Endothelial cell of umbilical vein (primary cell): ENCODE measurements at regions of chr1 and their contacts with region 1.

Region 1: GRCh38 chr1:234925440-234926263 is 203.0 kb downstream of the TOMM20 start:
- DNase-seq: peak; percentile 94
- H3K4me3 ChIP-seq: no peak overlapping the region
- H3K27ac ChIP-seq: peak overlapping the region; percentile 90
- H3K4me1 ChIP-seq: peaks cover 41% of the 10 kb centered on the region
- H3K27me3 ChIP-seq: no peaks in the 10 kb centered on the region
- CTCF ChIP-seq: no peak
- POLR2A ChIP-seq: no peak

Region 2: GRCh38 chr1:234962340-234962989 is 36.8 kb after region 1 on chr1:
- CTCF ChIA-PET with region 1: interaction called, 4 read pairs
- POLR2A ChIA-PET with region 1: no interaction called
- dilution Hi-C with region 1: no loop called
- intact Hi-C with region 1: loop called (anchors 1 kb)
- DNase-seq: no peak
- H3K4me3 ChIP-seq: no peak overlapping the region
- H3K27ac ChIP-seq: peak overlapping the region; percentile 3
- H3K4me1 ChIP-seq: peaks cover 34% of the 10 kb centered on the region
- H3K27me3 ChIP-seq: no peaks in the 10 kb centered on the region
- CTCF ChIP-seq: no peak
- POLR2A ChIP-seq: no peak